ENCODE measurements at regions of chr17 and their contacts with region 1.

Region 1: DNA sequence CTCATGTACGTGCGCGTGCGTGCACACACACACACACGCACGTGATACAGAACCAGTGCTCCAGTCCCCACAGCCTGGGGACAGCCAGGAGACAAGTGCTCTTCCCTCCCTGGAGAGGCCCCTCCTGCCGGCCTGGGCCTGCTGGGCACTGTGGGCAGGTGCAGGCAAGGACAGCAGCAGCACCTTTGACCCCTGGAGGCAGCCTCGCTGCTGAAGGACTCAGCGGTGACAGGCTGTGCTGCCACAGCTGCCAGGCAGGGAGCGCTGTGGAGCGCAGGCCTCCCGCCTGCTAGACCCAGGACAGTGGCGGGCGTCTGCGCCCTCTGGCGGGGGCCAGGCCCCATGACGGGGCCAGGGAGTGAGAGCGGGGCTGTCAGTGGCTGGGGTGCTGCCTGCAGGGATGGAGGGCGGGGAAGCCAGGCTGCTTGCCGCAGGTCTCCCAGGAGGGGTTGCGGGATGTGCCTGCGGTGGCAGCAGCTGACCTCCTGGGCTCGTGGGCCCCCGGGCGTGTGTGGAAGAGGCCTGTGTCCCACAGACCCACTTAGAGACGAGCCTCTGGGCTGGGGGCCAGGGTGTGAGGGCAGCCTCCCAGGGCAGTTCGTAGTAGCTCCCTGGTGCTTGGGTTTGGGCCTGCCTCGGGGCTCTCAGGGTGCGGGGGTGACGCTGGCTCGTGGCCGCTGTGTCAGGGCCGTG is 63.5 kb upstream of the PVALEF start:
- DNase-seq: peak; percentile 91
- ATAC-seq: peak; percentile 89

Region 2: GRCh38 chr17:81025741-81026129 is 76.0 kb before region 1 on chr17:
- intact Hi-C with region 1: loop called (anchors 2 kb)
- DNase-seq: no peak
- ATAC-seq: no peak

Region 3: GRCh38 chr17:81030741-81031565 is 70.8 kb before region 1 on chr17:
- intact Hi-C with region 1: loop called (anchors 2 kb)
- DNase-seq: peak; percentile 63
- ATAC-seq: peak; percentile 45

Measured in Right ventricle myocardium superior (tissue), 1 donor.